Right ventricle myocardium superior (tissue), 1 donor: ENCODE measurements at regions of chr2 and their contacts with region 1.

Region 1: DNA sequence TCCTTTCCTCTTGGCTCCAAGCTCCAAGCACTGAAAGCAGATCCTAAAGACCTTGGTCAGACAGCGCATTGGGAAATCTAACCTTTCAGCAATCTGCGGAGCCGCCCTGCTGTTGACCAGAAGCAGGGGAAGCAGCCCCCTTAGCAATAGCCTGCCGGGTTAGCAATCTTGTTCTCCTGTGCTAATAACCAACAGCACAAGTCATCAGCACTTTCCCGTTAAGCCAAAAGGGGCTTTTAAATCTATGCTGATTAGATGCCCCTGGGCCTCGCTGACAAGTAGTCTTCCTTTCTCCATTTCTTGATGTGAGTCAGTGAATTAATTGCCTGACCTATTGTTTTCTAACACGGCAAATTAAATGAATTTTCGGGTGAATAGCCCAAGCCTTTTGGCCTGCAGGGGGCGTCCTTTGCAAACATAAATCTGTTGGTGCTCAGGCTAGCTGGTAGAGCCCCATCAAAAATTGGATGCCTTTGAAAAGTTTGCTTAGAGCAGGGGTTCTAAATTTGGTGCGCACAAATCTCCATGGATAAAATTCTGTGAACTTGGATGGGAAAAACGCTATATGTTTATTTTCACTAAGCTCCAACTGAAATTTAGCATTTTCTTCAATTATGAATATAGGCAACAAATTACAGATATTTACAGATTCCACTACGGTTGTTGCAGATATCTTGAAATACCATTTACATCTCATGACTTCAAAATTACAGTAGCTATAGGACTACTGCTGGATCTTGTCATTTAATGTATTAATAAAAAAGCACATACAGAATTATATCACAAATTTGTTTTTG is 24.6 kb downstream of the MAIP1 start:
- DNase-seq: peak; percentile 90
- ATAC-seq: peak; percentile 92

Region 2: GRCh38 chr2:200065477-200065876 is 85.4 kb after region 1 on chr2:
- intact Hi-C with region 1: no loop called
- DNase-seq: no peak
- ATAC-seq: no peak

Region 3: GRCh38 chr2:200483729-200484198 is 503.7 kb after region 1 on chr2:
- intact Hi-C with region 1: loop called (anchors 5 kb)
- DNase-seq: no peak
- ATAC-seq: no peak

Region 4: DNA sequence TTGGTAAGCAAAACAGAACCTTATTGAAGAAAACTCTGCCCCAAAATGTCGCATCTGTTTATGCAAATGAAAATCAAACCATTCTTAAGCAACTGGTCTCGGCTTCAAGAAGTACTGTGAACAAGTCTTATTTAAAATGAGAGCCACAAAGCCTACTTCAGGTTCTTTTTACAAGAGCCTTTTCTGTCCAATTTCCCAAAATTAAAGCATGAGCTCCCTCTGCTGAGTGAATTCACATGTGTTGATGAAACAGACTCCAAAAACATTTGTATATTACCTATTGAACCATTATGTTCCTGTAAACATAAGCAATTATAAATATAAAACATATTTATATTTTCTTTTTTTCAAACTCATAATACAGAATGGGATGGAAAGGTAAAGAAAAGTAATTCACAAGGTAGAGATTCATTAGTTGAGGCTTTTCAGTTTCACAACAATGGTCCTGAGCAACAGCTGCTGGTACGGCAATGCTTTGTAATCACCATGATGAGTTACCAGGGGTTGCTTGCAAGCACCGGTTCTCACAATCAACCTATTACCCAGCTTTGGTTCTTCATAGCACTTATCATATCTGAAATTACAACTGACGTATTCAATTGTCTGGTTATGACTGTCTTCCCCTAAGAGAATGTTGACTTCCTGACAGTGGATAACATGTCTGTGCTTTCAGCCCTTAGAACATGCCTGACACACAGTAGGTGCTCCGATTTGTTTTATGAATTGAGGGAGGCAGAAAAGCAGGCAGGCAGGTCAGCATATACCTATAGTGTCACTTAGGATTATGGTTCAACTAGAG is 723.3 kb after region 1 on chr2:
- intact Hi-C with region 1: loop called (anchors 10 kb)
- DNase-seq: no peak
- ATAC-seq: peak; percentile 66